Activated naive CD4-positive, alpha-beta T cell treated with anti-CD3 and anti-CD28 coated beads for 36 hours (primary cell): ENCODE measurements at regions of chr6 and their contacts with region 1.

Region 1: GRCh38 chr6:46221222-46221793 is 50.5 kb upstream of the ENPP5 start:
- DNase-seq: no peak
- H3K4me3 Mint-ChIP-seq: no peak overlapping the region
- H3K27ac Mint-ChIP-seq: peak overlapping the region; percentile 80
- H3K4me1 Mint-ChIP-seq: peaks cover 30% of the 10 kb centered on the region
- H3K27me3 Mint-ChIP-seq: peaks cover 11% of the 10 kb centered on the region

Region 2: GRCh38 chr6:46090115-46091079 is 130.9 kb before region 1 on chr6:
- CTCF ChIA-PET with region 1: interaction called, 7 read pairs
- intact Hi-C with region 1: loop called (anchors 1 kb)
- DNase-seq: peak; percentile 72
- H3K4me3 Mint-ChIP-seq: no peak overlapping the region
- H3K27ac Mint-ChIP-seq: no peak overlapping the region
- H3K4me1 Mint-ChIP-seq: no peaks in the 10 kb centered on the region
- H3K27me3 Mint-ChIP-seq: peaks cover 18% of the 10 kb centered on the region

Region 3: DNA sequence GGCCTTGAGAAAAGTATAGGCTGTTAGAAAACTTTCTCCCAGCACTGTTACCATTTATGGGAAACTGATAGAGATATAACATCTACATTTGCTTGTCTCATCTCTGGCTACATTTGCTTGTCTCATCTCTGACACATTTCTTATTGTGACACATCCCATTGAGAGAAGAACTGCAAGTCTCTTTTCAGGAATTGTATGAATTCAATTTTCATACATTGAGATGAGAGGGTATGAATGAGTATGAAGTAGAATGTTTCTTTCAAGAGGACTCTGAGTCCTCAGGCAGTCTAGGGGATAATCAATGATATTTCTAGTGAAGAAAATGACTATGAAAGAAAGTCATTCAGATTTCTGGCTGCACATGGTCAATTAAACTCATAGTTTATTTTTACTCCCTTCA is 13.0 kb before region 1 on chr6:
- CTCF ChIA-PET with region 1: interaction called, 4 read pairs
- intact Hi-C with region 1: loop called (anchors 1 kb)
- DNase-seq: no peak
- H3K4me3 Mint-ChIP-seq: no peak overlapping the region
- H3K27ac Mint-ChIP-seq: no peak overlapping the region
- H3K4me1 Mint-ChIP-seq: no peaks in the 10 kb centered on the region
- H3K27me3 Mint-ChIP-seq: peaks cover 9% of the 10 kb centered on the region

Region 4: DNA sequence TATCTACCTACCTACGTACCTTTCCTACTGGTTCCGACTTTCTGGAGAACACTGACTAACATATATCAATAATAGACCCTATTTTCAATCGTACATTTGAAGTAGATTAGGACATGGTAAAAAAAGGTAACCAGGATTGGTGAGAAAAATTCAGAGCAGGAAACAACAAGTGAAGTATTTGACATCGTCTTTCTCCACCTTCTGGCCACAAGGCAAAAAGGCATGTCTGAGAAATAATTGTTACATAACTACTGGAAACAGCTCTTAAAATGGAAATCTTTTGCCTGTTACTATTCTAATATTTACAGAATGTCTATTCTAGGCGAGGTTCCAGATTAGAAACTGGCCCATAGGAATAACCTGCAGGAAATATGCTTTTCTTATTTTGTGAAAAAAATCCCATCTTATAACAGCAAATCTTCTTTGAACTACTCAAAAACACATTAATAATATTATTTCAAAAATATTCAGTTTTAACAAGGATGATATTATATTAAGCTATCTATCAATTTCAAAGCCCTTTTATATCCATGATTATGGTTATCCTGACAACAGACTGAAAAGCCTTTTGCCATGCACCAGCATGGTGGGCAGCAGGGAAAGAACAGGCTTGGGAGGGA is 189.1 kb after region 1 on chr6:
- CTCF ChIA-PET with region 1: interaction called, 22 read pairs
- intact Hi-C with region 1: loop called (anchors 1 kb)
- DNase-seq: peak; percentile 53
- H3K4me3 Mint-ChIP-seq: no peak overlapping the region
- H3K27ac Mint-ChIP-seq: no peak overlapping the region
- H3K4me1 Mint-ChIP-seq: no peaks in the 10 kb centered on the region
- H3K27me3 Mint-ChIP-seq: no peaks in the 10 kb centered on the region

Region 5: DNA sequence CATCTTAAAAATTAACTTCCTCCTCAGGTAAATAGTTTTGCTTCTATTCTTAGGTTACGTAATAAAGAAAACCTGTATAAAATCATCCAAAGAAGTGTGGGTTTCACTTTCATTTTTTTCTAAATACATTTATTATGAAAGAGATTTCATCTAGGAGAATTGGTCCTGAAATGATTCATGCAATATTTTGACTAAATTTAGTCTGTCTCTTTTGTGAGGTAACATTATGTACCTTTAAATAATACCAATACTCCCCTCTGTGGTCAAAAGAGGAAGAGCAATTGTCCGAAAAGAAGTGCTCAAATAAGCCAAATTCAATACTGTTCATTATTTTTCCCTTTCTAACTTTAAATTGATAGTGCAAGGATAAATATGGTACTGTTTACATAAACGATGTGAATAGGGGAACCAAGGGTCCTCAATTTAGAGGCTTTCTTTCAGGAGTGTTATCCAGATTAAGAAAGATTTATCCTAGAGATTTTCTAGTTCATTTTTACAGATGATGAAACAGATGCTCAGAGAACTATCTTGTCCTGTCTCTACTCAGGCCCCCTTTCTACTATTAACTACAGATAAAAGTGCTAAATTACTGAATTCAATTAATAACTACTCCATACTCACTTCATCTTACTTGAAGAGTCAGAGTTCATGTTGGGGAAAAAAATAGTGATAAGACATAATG is 405.1 kb after region 1 on chr6:
- CTCF ChIA-PET with region 1: no interaction called
- intact Hi-C with region 1: loop called (anchors 1 kb)
- DNase-seq: no peak
- H3K4me3 Mint-ChIP-seq: no peak overlapping the region
- H3K27ac Mint-ChIP-seq: no peak overlapping the region
- H3K4me1 Mint-ChIP-seq: peaks cover 10% of the 10 kb centered on the region
- H3K27me3 Mint-ChIP-seq: peaks cover 3% of the 10 kb centered on the region

Region 6: DNA sequence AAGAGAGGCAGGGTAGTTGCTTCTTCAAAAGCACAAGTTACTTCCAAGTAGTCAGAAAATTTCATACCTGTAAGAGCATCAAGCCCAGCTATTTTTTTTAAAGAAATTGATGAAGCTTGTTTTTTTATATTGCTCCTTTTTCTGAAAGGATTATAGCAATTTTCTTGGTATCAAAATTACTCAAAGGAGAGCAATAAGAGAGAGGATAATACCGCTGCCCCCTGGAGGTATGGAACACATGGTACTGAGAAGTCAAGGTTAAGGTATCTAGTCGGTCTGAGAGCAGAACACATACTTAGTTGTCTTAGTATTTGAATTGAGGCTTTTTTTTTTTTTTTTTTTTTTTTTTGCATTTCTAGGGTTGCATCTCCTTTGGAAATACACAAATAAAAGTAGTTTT is 641.1 kb after region 1 on chr6:
- CTCF ChIA-PET with region 1: no interaction called
- intact Hi-C with region 1: loop called (anchors 5 kb)
- DNase-seq: peak; percentile 18
- H3K4me3 Mint-ChIP-seq: no peak overlapping the region
- H3K27ac Mint-ChIP-seq: no peak overlapping the region
- H3K4me1 Mint-ChIP-seq: no peaks in the 10 kb centered on the region
- H3K27me3 Mint-ChIP-seq: peaks cover 11% of the 10 kb centered on the region